ENCODE measurements at regions of chr5 and their contacts with region 1.

Region 1: GRCh38 chr5:95005811-95006210 is 279.1 kb downstream of the MCTP1 start:
- DNase-seq: no peak
- CTCF ChIP-seq: no peak

Region 2: GRCh38 chr5:95022967-95023695 is 17.3 kb after region 1 on chr5:
- CTCF ChIA-PET with region 1: interaction called, 11 read pairs
- POLR2A ChIA-PET with region 1: no interaction called
- DNase-seq: no peak
- CTCF ChIP-seq: no peak

Region 3: DNA sequence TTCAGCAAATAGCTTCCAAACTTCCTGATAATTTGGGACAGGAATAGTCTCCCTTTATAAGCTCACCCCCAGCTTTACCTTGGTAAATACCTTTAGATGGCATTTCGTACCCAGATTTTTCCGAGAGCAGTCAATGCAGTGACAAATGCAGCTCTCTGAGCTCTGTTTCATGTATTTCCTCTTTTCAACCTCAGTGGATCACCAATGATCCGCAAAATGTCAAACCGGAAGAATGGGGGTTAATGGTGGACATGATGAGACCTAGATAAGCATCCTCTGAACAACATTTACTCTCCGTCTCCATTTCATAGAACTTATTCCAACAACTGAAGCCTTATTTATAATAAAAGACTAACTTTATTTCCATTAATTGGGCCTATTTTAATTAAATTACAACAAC is 51.8 kb after region 1 on chr5:
- CTCF ChIA-PET with region 1: no interaction called
- POLR2A ChIA-PET with region 1: no interaction called
- DNase-seq: no peak
- CTCF ChIP-seq: no peak